ENCODE measurements at regions of chr6 and their contacts with region 1.

Region 1: GRCh38 chr6:7154341-7155139 is 46.8 kb downstream of the RREB1 start:
- DNase-seq: no peak
- ATAC-seq: peak; percentile 23 to 43 (median 32)
- H3K4me3 ChIP-seq: no peak overlapping the region
- H3K27ac ChIP-seq: peak overlapping the region; percentile 71
- H3K4me1 ChIP-seq: peaks cover 72% of the 10 kb centered on the region
- H3K27me3 ChIP-seq: no peaks in the 10 kb centered on the region
- CTCF ChIP-seq: no peak

Region 2: DNA sequence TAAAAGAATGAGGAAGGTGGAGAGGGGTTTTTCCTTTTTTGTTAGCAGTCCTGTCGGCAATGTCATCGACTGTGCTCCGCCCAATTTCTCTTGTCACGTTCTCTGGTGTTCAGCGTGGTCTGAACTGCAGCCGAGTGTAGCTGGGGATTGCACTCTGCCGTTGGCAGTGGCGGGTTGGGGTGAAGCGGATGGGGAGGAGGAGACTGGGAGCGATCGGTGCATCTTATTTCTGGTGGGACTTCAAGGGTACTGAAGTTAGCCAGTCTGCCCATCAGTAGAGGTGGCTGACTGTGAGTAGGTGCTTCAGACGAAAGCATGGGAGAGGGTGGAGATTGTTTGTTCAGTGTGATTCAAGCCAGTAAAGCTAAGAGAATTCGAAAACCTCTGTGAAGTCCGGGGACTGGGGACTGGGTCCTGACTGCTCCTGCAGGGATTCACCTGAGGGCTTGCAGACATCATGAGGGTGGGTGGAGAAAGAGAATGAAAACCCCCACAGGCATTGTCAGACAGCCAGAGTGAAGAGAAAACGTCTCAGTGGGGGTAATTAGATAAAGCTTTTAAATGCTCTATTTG is 41.7 kb before region 1 on chr6:
- intact Hi-C with region 1: loop called in 1 of 2 experiments (anchors 5 kb)
- DNase-seq: no peak
- ATAC-seq: peak in 1 of 4 donors; percentile 31
- H3K4me3 ChIP-seq: peak overlapping the region; percentile 24
- H3K27ac ChIP-seq: peak overlapping the region; percentile 81
- H3K4me1 ChIP-seq: peaks cover 57% of the 10 kb centered on the region
- H3K27me3 ChIP-seq: no peaks in the 10 kb centered on the region
- CTCF ChIP-seq: no peak

Region 3: GRCh38 chr6:7758456-7758855 is 603.9 kb after region 1 on chr6:
- intact Hi-C with region 1: no loop called
- DNase-seq: peak; percentile 43 to 61
- ATAC-seq: peak in 1 of 4 donors; percentile 33
- H3K4me3 ChIP-seq: no peak overlapping the region
- H3K27ac ChIP-seq: no peak overlapping the region
- H3K4me1 ChIP-seq: no peaks in the 10 kb centered on the region
- H3K27me3 ChIP-seq: peaks cover 0 to 8% (median 2%) of the 10 kb centered on the region in 3 donors
- CTCF ChIP-seq: no peak

Measured in psoas muscle (tissue), 8 donors.